ENCODE measurements at regions of chr3 and their contacts with region 1.

Region 1: DNA sequence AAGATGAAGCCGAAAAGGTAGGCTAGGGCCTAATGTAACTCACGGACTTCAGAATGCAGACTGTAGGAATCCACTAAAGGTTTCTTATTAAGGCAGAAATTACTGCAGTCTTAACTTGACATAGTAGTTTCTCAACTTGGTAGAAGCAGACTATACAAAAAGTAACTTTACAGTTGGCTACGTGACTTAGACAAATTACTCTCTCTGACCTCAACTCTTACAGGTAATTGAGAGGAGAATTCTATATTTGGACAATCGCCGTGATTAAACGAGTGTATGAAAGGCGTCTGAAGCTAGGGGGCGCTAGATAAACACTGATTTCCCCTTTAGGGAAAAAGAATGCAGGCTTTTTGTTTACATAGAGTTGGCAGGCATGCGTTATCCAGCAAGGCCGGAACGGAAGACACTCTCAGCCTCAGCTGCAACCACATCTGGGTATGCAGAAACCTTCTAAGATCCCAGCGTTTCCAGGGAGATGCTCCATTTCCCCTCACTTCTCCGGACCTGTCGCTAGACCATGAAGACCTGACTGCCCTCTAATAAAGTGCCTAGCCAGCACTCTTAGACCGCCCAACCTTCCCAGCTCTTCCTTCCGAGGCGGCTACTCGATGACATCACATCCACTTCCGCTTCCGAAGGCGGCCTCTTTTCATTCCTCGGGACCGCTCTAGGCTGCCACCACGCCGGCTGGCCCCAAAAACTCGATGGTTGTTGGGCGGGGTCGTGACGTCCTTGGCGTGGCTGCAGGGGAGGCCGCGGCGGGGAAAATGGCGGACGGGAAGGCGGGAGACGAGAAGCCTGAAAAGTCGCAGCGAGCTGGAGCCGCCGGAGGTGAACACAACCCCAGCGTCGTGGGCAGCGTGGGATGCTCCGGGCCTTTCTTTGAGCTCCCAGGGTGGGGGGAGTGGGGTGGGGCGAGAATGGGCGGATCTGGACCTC is at the start of gene PCNP:
- DNase-seq: peak; percentile 88 to 99
- ATAC-seq: peak; percentile 91 to 94
- H3K4me3 ChIP-seq: peak within 1 kb of the TSS; percentile 70
- H3K27ac ChIP-seq: peak within 1 kb of the TSS; percentile 89 to 91
- H3K4me1 ChIP-seq: peaks cover 23% of the 10 kb centered on the region
- CTCF ChIP-seq: peak; percentile 95
- EP300 ChIP-seq: no peak
- POLR2A ChIP-seq: peak; percentile 79
- RAD21 ChIP-seq: peak; percentile 60 to 65; a peak in 4 of 5 replicates
- polyA plus RNA-seq, gene PCNP: 95.8 and 135 TPM in 2 replicates

Region 2: GRCh38 chr3:100869787-100870186 is 703.9 kb before region 1 on chr3:
- CTCF ChIA-PET with region 1: no interaction called
- POLR2A ChIA-PET with region 1: no interaction called
- DNase-seq: no peak
- ATAC-seq: no peak
- H3K4me3 ChIP-seq: no peak overlapping the region
- H3K27ac ChIP-seq: no peak overlapping the region
- H3K4me1 ChIP-seq: peaks cover 2% of the 10 kb centered on the region; the same call in 1 of the 3 replicates
- CTCF ChIP-seq: no peak
- EP300 ChIP-seq: no peak
- POLR2A ChIP-seq: no peak
- RAD21 ChIP-seq: no peak

Region 3: GRCh38 chr3:101433653-101434052 is 140.1 kb before region 1 on chr3:
- CTCF ChIA-PET with region 1: no interaction called
- POLR2A ChIA-PET with region 1: no interaction called
- DNase-seq: no peak
- ATAC-seq: no peak
- H3K4me3 ChIP-seq: no peak overlapping the region
- H3K27ac ChIP-seq: no peak overlapping the region
- H3K4me1 ChIP-seq: no peaks in the 10 kb centered on the region
- CTCF ChIP-seq: no peak
- EP300 ChIP-seq: no peak
- POLR2A ChIP-seq: no peak
- RAD21 ChIP-seq: no peak

Region 4: DNA sequence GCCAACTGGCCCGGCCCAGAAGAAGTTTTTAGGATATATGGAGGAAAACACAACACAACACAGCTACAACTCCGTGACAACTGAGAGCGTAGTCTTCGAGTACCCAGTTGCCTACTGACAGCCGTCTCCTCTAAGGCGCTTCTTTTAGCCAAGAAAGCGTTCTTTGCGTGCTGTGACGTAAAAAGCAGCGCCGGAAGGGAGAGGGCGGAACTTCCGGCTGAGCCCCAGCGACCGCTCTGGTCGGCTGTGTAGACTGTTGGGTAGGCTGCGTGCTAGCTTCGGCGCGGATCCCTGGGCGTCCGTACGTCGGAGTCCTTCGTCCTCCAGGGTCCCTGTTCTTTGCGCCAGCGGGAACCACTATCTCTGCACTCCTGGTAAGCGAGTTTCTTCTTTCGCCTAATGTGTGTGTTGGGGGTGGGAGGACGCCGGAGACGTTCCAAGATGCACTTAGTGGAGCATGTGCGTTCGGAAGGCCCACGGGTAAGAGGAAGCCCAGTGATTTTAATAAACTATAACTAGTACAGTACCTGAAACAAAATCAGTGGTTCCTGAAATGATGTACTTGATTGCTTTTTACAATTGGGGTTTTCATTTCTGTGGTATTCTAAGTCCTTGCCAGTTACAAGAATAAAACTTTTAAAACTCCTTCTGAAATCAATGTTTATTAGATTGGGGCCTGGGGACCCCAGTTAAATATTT is 11.9 kb before region 1 on chr3 and contains the start of gene TRMT10C:
- CTCF ChIA-PET with region 1: interaction called, 18 read pairs
- POLR2A ChIA-PET with region 1: interaction called, 29 read pairs
- DNase-seq: peak; percentile 90 to 93
- ATAC-seq: peak; percentile 100
- H3K4me3 ChIP-seq: peak within 1 kb of the TSS; percentile 93
- H3K27ac ChIP-seq: peak within 1 kb of the TSS; percentile 88 to 93
- H3K4me1 ChIP-seq: peaks cover 13% of the 10 kb centered on the region; the same call in 2 of the 3 replicates
- CTCF ChIP-seq: no peak
- EP300 ChIP-seq: no peak
- POLR2A ChIP-seq: peak; percentile 77; the same call in 1 of the 2 replicates
- RAD21 ChIP-seq: no peak
- polyA plus RNA-seq, gene TRMT10C: 27.7 and 37.0 TPM in 2 replicates

Region 5: GRCh38 chr3:101676765-101677435 is 103.2 kb after region 1 on chr3 and contains the start of gene ZBTB11:
- CTCF ChIA-PET with region 1: interaction called, 16 read pairs
- POLR2A ChIA-PET with region 1: interaction called, 11 read pairs
- DNase-seq: peak; percentile 97 to 100
- ATAC-seq: peak; percentile 75 to 86
- H3K4me3 ChIP-seq: peak within 1 kb of the TSS; percentile 95
- H3K27ac ChIP-seq: peak within 1 kb of the TSS; percentile 90 to 92
- H3K4me1 ChIP-seq: peaks cover 22% of the 10 kb centered on the region
- CTCF ChIP-seq: peak; percentile 37; the same call in 2 of the 3 replicates
- EP300 ChIP-seq: no peak
- POLR2A ChIP-seq: peak; percentile 60
- RAD21 ChIP-seq: peak in 1 of 2 experiments; percentile 25; a peak in 3 of 5 replicates
- polyA plus RNA-seq, gene ZBTB11: 18.8 and 24.3 TPM in 2 replicates

Region 6: DNA sequence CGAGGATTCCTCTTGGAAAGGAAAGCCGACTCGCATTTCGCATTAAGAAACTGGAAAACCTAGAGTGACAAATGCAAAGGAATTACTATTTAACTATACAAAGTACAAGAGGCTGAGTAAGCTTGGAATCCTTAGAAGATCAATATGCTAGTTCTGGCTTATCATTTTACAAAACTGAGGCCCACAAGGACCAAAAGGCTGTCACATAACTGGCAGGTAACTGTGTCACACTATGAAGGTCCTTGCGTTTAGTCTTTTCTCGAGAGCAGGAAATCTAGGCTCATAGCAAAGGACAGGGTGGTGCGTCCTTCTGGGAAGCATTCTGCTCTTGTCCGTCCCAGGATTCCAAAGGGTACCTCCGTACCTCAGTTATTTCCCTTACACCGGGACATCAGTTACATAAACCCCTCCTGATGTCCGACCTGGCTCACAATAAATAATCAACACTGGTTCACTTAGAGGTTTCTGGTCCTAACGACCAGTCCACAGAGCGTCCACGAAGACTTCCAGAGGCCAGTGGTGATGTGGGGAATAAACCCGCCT is 112.2 kb after region 1 on chr3:
- CTCF ChIA-PET with region 1: interaction called, 6 read pairs
- POLR2A ChIA-PET with region 1: interaction called, 12 read pairs
- DNase-seq: no peak
- ATAC-seq: peak; percentile 30 to 32; a peak in 5 of 6 replicates
- H3K4me3 ChIP-seq: peak overlapping the region; percentile 73
- H3K27ac ChIP-seq: peak overlapping the region; percentile 89 to 94
- H3K4me1 ChIP-seq: peaks cover 26% of the 10 kb centered on the region
- CTCF ChIP-seq: no peak
- EP300 ChIP-seq: no peak
- POLR2A ChIP-seq: no peak
- RAD21 ChIP-seq: no peak

Region 7: GRCh38 chr3:101849051-101849720 is 275.5 kb after region 1 on chr3 and contains the start of gene NFKBIZ:
- CTCF ChIA-PET with region 1: no interaction called
- POLR2A ChIA-PET with region 1: no interaction called
- DNase-seq: peak; percentile 91 to 92
- ATAC-seq: peak; percentile 90 to 92
- H3K4me3 ChIP-seq: peak within 1 kb of the TSS; percentile 84
- H3K27ac ChIP-seq: peak within 1 kb of the TSS; percentile 96 to 98
- H3K4me1 ChIP-seq: peaks cover 40% of the 10 kb centered on the region
- CTCF ChIP-seq: no peak
- EP300 ChIP-seq: no peak; a peak in 1 of 5 replicates
- POLR2A ChIP-seq: peak; percentile 99
- RAD21 ChIP-seq: no peak
- polyA plus RNA-seq, gene NFKBIZ: 32.9 and 36.1 TPM in 2 replicates

Measured in A549 (cell line).